ENCODE measurements at regions of chr11 and their contacts with region 1.

Region 1: DNA sequence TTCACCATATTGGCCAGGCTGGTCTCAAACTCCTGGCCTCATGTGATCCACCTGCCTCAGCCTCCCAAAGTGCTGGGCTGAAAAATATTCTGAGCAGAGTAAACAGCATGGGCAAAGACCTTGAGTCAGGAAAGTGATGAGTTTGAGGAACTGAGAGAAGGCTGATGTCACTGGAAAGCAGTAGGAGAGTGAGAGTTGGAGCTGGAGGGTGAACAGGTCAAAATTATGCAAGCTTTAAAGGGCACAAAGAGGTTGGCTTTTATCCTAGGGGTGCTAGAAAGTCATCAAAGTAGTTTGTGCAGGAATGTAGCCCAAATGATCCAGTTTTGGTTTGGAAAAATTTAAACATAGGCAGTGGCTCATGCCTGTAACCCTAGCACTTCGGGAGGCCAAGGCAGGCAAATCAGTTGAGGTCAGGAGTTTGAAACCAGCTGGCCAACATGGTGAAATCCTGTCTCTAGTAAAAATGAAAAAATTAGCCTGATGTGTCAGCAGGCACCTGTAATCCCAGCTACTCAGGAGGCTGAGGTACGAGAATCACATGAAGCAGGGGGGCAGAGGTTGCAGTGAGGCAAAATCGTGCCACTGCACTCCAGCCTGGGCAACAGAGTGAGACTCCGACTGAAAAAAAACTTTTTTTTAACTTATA is 44.7 kb upstream of the CXCR5 start:
- DNase-seq: peak; percentile 72
- H3K4me3 ChIP-seq: no peak overlapping the region
- H3K27ac ChIP-seq: peak overlapping the region; percentile 57
- H3K4me1 ChIP-seq: peaks cover 53% of the 10 kb centered on the region
- CTCF ChIP-seq: no peak

Region 2: DNA sequence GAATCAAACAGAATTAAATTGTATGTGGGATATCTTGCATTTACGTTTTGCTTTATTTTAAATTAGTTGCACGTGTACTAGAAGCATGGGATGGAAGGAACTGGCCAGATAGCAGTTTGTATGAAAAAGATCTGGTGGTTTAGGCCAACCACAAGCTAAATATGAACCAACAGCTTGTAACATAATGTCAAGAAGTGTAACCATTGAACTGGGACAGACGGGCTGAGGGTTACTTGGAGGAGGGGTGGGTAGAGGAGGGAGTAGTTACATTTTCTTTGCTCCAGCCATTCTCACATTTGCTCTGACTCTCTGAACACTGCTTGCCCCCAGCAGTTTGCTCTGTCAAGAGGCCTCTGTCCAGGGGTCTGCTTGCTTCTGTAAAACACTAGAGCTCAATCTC is 12.9 kb after region 1 on chr11:
- CTCF ChIA-PET with region 1: no interaction called
- POLR2A ChIA-PET with region 1: interaction called, 10 read pairs
- intact Hi-C with region 1: no loop called
- DNase-seq: peak; percentile 86
- H3K4me3 ChIP-seq: peak overlapping the region; percentile 33
- H3K27ac ChIP-seq: peak overlapping the region; percentile 84
- H3K4me1 ChIP-seq: peaks cover 56% of the 10 kb centered on the region
- CTCF ChIP-seq: no peak

Region 3: GRCh38 chr11:118859973-118860372 is 20.9 kb after region 1 on chr11:
- CTCF ChIA-PET with region 1: no interaction called
- POLR2A ChIA-PET with region 1: interaction called, 11 read pairs
- intact Hi-C with region 1: no loop called
- DNase-seq: no peak
- H3K4me3 ChIP-seq: no peak overlapping the region
- H3K27ac ChIP-seq: peak overlapping the region; percentile 40
- H3K4me1 ChIP-seq: peaks cover 49% of the 10 kb centered on the region
- CTCF ChIP-seq: no peak

Region 4: GRCh38 chr11:119323538-119324033 is 484.6 kb after region 1 on chr11:
- CTCF ChIA-PET with region 1: no interaction called
- POLR2A ChIA-PET with region 1: no interaction called
- intact Hi-C with region 1: no loop called
- DNase-seq: peak; percentile 70
- H3K4me3 ChIP-seq: no peak overlapping the region
- H3K27ac ChIP-seq: no peak overlapping the region
- H3K4me1 ChIP-seq: peaks cover 40% of the 10 kb centered on the region
- CTCF ChIP-seq: peak; percentile 94

Region 5: DNA sequence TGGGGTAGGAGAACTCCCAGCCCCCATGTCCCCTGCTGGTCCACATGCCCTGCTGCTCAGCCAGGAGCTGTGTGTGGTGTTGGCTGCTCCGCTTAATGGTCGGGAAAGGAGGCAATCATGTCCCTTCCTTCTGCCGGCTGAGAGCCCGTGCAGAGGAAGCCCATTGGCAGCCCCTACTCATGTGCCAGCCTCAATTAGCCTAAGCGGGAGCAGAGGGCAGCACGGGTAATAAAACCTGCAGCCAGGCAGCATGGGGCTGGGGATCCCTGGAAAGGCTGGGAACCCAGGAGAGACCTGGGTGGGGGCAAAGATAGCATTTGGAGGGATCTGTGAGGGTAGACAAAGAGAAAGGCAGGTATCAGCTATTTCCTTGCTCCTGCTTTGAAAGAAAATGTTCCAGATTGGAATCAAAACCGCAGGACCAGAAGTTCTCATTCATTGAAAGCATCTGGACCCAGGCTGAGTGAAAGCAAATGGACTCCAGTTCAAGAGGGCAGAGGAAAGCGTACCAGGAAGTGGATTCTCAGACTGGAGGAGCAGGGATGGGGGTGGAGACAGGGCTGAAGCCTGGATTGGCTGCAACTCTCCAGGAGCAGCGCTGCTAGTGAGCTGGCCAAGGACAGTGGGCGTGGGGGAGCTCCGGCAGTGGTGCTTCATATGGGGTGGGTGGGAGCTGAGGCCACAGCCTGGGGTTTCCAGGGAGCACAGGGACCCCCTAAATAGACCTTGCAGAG is 993.3 kb after region 1 on chr11:
- CTCF ChIA-PET with region 1: no interaction called
- POLR2A ChIA-PET with region 1: no interaction called
- intact Hi-C with region 1: no loop called
- DNase-seq: no peak
- H3K4me3 ChIP-seq: no peak overlapping the region
- H3K27ac ChIP-seq: no peak overlapping the region
- H3K4me1 ChIP-seq: no peaks in the 10 kb centered on the region
- CTCF ChIP-seq: no peak